Right cardiac atrium (tissue), 5 donors: ENCODE measurements at regions of chr5 and their contacts with region 1.

Region 1: GRCh38 chr5:170278611-170279452 is 18.7 kb downstream of the LCP2 start:
- DNase-seq: peak in 2 of 3 donors; percentile 76 to 78
- ATAC-seq: peak; percentile 62 to 63
- H3K4me3 ChIP-seq: no peak overlapping the region
- H3K27ac ChIP-seq: no peak overlapping the region
- H3K4me1 ChIP-seq: peaks cover 6% of the 10 kb centered on the region
- H3K27me3 ChIP-seq: no peaks in the 10 kb centered on the region

Region 2: GRCh38 chr5:169289520-169289919 is 989.3 kb before region 1 on chr5:
- intact Hi-C with region 1: no loop called
- DNase-seq: no peak
- ATAC-seq: no peak
- H3K4me3 ChIP-seq: no peak overlapping the region
- H3K27ac ChIP-seq: no peak overlapping the region
- H3K4me1 ChIP-seq: peaks cover 7% of the 10 kb centered on the region
- H3K27me3 ChIP-seq: no peaks in the 10 kb centered on the region

Region 3: DNA sequence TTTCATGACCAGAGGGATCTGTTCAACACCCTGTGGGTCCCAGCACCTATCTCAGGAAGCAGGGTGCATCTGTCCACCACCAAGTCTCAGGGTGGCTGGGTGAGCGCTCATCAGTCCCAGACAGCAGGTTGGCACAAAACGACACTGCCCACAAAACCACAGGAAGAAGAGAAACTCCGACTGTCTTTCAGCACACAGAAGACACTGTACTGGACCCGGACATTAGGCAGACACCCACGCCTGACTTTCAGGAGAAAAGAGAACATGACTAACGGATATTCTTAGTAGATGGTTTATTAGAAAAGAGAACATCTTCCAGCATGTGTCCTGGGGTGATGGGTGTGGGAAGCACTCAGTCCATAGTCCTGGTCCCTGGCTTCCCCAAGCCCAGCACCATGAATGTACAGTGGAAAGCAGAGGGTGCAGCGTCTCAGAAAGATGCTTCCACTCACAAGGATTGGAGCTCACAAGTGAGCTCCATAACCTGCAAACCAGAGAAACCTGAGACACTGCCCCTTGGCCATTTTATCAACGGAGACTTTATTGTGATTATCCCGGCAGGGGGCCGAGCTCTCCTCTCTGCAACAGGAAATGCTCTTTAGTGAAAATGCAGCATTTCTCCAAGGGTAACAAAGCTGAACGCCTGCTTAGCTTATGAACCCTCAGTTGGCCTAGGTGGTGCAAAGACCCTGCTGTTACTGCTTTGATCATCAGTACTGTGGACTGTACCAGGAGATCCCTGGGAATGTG is 54.5 kb after region 1 on chr5:
- intact Hi-C with region 1: loop called in 2 of 4 experiments (anchors 5 to 10 kb)
- DNase-seq: no peak
- ATAC-seq: no peak
- H3K4me3 ChIP-seq: no peak overlapping the region
- H3K27ac ChIP-seq: no peak overlapping the region
- H3K4me1 ChIP-seq: peaks cover 6% of the 10 kb centered on the region
- H3K27me3 ChIP-seq: no peaks in the 10 kb centered on the region

Region 4: DNA sequence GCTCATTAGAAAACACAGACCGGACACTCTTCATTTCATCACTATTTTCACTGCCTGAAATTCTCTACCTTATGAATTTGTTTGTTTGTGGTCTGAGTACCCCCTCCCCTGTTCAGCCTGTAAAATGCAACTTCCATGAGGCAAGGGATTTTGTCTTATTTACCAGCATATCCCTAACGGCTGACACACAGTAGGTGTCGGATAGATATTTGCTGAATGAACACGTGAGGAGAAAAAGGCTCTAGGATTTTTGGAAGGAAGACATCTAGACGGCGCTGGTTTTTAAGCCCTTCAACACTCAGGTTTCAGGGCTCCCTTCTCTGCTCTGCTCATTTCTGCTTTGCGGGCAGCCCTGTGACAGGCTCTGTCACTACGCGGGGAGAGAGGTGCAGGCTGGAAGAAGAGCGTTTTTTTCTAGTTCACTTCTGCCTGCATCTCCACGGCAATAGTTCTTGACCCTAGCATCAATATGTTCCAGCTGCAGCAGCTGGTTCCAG is 69.4 kb after region 1 on chr5:
- intact Hi-C with region 1: loop called in 1 of 4 experiments (anchors 10 kb)
- DNase-seq: no peak
- ATAC-seq: peak; percentile 34 to 47
- H3K4me3 ChIP-seq: no peak overlapping the region
- H3K27ac ChIP-seq: no peak overlapping the region
- H3K4me1 ChIP-seq: no peaks in the 10 kb centered on the region
- H3K27me3 ChIP-seq: no peaks in the 10 kb centered on the region

Region 5: GRCh38 chr5:170411100-170411499 is 132.3 kb after region 1 on chr5:
- intact Hi-C with region 1: loop called in 1 of 4 experiments (anchors 10 kb)
- DNase-seq: no peak
- ATAC-seq: no peak
- H3K4me3 ChIP-seq: no peak overlapping the region
- H3K27ac ChIP-seq: no peak overlapping the region
- H3K4me1 ChIP-seq: no peaks in the 10 kb centered on the region
- H3K27me3 ChIP-seq: no peaks in the 10 kb centered on the region